ENCODE measurements at regions of chrX and their contacts with region 1.

Region 1: DNA sequence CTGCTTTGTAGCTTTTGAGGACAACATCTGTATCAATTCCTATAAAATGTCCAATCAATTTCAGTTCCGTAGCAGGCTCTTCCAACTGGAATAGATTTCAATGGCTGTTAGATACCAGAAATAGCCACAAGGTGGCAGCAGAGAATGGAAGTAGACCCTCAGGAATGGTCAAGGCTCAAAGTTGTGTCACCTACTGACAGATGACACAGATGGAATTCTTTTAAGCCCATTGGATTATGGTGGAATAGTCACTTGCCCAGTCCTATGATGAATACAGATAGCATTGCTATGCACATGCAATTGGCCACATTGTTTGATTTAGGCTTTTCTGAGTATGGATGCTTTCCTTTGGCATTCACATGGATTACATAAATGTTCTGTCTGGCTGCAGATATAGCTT is 130.4 kb upstream of the RADX start:
- DNase-seq: peak in 3 of 10 donors; percentile 10 to 60 (median 43)
- H3K4me3 ChIP-seq: no peak overlapping the region
- H3K27ac ChIP-seq: no peak overlapping the region
- H3K27me3 ChIP-seq: peaks cover 0 to 49% (median 8%) of the 10 kb centered on the region in 45 donors
- CTCF ChIP-seq: peak in 55 of 56 donors; percentile 53 to 96 (median 85)

Region 2: DNA sequence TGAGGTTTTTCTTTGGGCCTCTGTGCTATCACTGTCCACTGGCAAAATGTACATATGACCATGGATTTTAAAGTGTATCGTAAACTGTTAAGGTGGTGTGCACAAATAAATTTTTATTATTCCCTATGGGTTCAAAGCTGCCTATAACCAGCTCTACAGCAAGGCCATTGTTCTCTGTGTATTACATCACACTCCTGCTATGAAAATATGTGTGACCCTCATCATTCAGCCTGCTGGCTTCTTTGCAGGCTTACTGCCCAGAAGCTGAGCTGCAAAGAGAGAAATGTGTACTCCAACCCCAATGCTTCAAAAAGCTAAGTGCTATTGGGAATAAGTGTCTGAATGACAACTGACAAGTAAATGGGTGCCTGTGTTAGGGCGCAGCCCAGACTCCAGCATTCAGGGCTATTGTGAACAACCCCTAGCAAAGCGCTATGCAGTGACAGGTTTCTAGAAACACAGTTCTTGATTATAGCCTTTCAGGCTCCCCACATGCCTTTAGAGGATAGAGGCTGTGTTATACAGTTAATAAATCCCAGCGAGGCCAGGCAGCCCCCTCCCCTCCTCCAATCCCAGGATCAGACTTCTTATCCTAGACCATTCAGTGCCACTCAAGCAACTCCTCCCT is 89.9 kb before region 1 on chrX:
- intact Hi-C with region 1: no loop called
- DNase-seq: no peak
- H3K4me3 ChIP-seq: no peak overlapping the region
- H3K27ac ChIP-seq: peak overlapping the region in 32 of 59 donors; percentile 0 to 78 (median 49)
- H3K27me3 ChIP-seq: peaks cover 0 to 65% (median 14%) of the 10 kb centered on the region in 45 donors
- CTCF ChIP-seq: no peak

Region 3: GRCh38 chrX:106581856-106582255 is 100.5 kb after region 1 on chrX:
- intact Hi-C with region 1: no loop called
- DNase-seq: no peak
- H3K4me3 ChIP-seq: no peak overlapping the region
- H3K27ac ChIP-seq: no peak overlapping the region
- H3K27me3 ChIP-seq: peaks cover 0 to 48% (median 10%) of the 10 kb centered on the region in 45 donors
- CTCF ChIP-seq: no peak

Region 4: DNA sequence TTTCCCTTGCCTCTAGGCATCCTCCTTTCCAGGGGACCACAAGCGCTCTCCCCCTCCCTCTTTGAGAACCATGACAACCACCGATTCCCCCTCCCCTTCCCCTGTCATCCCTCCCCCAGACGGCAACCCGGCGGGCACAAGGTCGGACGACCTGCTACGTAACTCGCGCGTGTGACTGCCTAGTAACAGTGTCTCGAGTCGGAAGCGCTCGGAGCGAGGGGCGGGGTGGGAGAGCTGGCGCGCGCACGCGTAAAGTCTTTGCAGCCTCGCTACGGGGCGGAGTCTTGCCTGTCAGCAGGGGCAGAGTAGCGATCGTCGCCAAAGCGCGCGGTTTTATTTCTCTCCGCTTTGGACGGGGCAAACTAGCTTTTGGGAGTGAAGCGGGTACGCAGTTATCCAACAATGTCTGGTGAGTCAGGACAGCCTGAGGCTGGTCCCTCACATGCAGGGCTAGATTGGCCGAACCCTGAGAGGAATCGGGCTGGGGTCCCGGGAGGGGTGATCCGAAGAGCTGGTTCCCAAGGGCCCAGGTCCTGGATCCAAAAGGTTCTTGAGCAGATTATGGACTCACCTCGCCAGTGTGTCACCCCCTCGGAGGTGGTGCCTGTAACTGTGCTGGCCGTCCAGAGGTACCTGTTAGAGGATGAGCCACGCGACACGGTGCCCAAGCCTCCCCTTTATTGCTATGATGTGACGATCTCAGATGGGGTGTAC is 130.5 kb after region 1 on chrX and contains the start of gene RADX:
- intact Hi-C with region 1: loop called in 1 of 2 experiments (anchors 10 kb)
- DNase-seq: peak; percentile 10 to 88 (median 78)
- H3K4me3 ChIP-seq: peak within 1 kb of the TSS; percentile 29 to 75 (median 59)
- H3K27ac ChIP-seq: peak within 1 kb of the TSS in 31 of 59 donors; percentile 7 to 72 (median 41)
- H3K27me3 ChIP-seq: peaks cover 0 to 62% (median 9%) of the 10 kb centered on the region in 45 donors
- CTCF ChIP-seq: no peak
- total RNA-seq, gene RADX: 1.7 to 16.3 (median 7.7) TPM

Region 5: GRCh38 chrX:106619797-106620196 is 138.5 kb after region 1 on chrX:
- intact Hi-C with region 1: loop called (anchors 5 to 10 kb)
- DNase-seq: no peak
- H3K4me3 ChIP-seq: no peak overlapping the region
- H3K27ac ChIP-seq: no peak overlapping the region
- H3K27me3 ChIP-seq: peaks cover 0 to 78% (median 13%) of the 10 kb centered on the region in 45 donors
- CTCF ChIP-seq: peak in 47 of 56 donors; percentile 14 to 62 (median 43)

Region 6: DNA sequence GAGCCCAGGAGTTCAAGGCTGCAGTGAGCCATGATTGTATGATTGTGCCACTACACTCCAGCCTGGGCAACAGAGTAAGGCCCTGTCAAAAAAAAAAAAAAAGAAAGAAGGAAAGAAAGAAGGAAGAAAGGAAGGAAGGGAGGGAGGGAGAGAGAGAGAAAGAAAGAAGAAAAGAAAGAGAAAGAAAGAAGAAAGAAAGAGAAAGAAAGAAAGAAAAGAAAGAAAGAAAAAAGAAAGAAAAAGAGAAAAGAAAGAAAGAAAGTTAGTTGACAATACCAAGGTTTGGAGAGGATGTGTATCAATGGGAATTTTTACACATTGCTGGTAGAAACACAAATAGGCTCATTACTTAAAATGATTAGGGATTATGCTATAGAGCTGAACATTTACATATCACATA is 150.3 kb after region 1 on chrX:
- intact Hi-C with region 1: no loop called
- DNase-seq: no peak
- H3K4me3 ChIP-seq: no peak overlapping the region
- H3K27ac ChIP-seq: no peak overlapping the region
- H3K27me3 ChIP-seq: peaks cover 0 to 56% (median 13%) of the 10 kb centered on the region in 45 donors
- CTCF ChIP-seq: no peak

Region 7: DNA sequence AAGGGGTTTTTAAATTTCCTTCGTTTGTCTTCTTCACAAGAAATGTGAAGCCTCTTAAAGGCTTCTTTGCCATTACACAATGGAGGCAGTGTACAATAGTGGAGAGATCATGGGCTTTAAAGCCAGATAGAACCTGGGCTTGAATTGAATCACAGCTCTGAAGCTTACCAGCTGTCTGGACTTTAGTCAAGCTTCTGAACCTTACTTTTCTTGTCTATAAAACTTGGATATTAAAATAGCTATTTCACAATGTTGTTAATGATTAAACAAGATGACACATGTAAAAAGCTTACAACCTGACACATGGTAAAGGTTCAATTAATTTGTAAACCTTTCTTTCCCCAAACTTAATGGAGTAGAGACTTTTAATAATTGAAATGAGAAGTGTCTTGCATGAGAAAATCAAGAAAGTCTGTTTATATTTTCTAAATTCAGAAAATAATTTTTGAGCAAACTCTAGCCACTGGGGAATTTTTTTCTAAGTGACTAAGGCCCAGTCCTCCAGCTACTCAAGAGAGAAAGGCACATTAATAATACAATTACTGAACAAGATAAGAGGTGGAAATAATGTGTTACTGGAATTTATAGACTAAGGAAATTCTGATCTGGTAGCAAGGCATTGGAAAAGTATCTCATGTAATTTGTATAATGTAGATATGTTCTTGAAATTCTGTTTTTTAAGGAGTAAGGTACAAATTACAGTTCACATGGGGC is 299.5 kb after region 1 on chrX:
- intact Hi-C with region 1: loop called in 1 of 2 experiments (anchors 10 kb)
- DNase-seq: no peak
- H3K4me3 ChIP-seq: no peak overlapping the region
- H3K27ac ChIP-seq: no peak overlapping the region
- H3K27me3 ChIP-seq: peaks cover 0 to 87% (median 28%) of the 10 kb centered on the region in 45 donors
- CTCF ChIP-seq: no peak

Region 8: DNA sequence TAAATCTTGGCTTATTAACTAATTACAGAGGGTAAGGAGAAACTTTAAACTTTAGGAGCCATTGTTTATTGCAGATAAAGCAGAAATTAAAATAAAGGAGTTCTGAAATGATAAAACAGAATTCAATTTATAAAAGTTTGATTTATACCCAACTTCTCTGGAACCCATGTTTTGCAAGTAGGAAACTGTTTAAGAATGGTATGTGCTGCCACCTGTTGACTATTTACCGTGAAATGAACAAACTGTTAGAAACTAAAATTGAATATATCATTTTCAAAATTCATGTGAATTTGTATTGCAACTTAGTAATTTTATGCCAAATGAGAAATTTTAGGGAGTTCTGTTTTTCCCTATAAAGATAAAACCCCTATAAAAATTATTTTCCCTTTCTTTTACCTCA is 310.2 kb after region 1 on chrX:
- intact Hi-C with region 1: loop called (anchors 5 to 10 kb)
- DNase-seq: no peak
- H3K4me3 ChIP-seq: no peak overlapping the region
- H3K27ac ChIP-seq: no peak overlapping the region
- H3K27me3 ChIP-seq: peaks cover 0 to 38% (median under 1%) of the 10 kb centered on the region in 45 donors
- CTCF ChIP-seq: peak in 48 of 56 donors; percentile 10 to 65 (median 42)